Activated CD4-positive, alpha-beta T cell treated with anti-CD3 and anti-CD28 coated beads for 36 hours (primary cell): ENCODE measurements at regions of chr3 and their contacts with region 1.

Region 1: GRCh38 chr3:62665598-62666437 is 209.4 kb downstream of the CADPS start:
- DNase-seq: peak; percentile 64
- ATAC-seq: peak; percentile 47
- H3K4me3 Mint-ChIP-seq: no peak overlapping the region
- H3K27ac Mint-ChIP-seq: no peak overlapping the region
- H3K4me1 Mint-ChIP-seq: no peaks in the 10 kb centered on the region
- H3K27me3 Mint-ChIP-seq: no peaks in the 10 kb centered on the region

Region 2: GRCh38 chr3:62686506-62687286 is 20.9 kb after region 1 on chr3:
- CTCF ChIA-PET with region 1: no interaction called
- POLR2A ChIA-PET with region 1: no interaction called
- intact Hi-C with region 1: no loop called
- DNase-seq: no peak
- ATAC-seq: no peak
- H3K4me3 Mint-ChIP-seq: no peak overlapping the region
- H3K27ac Mint-ChIP-seq: no peak overlapping the region
- H3K4me1 Mint-ChIP-seq: no peaks in the 10 kb centered on the region
- H3K27me3 Mint-ChIP-seq: peaks cover 2% of the 10 kb centered on the region

Region 3: DNA sequence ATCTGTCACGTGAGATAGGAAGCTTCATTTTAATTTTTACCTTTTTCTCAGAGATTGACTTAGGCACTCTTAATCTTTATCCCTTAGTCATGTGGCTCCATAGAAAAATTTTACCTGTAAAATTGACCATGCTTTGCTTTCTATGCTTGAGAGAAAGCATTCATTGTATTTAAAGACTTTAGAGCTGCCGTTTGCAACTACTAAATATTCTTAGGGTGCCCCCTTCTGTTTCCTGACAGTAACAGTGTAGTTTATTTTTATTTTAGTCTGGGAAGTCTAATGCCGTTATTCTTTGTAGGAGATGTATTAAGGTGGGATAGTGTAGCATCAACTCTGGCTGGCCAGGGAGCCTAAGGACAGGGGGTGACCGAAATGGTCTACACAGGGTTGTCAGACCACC is 527.8 kb after region 1 on chr3:
- CTCF ChIA-PET with region 1: no interaction called
- POLR2A ChIA-PET with region 1: no interaction called
- intact Hi-C with region 1: loop called in 1 of 2 experiments (anchors 5 kb)
- DNase-seq: no peak
- ATAC-seq: no peak
- H3K4me3 Mint-ChIP-seq: no peak overlapping the region
- H3K27ac Mint-ChIP-seq: no peak overlapping the region
- H3K4me1 Mint-ChIP-seq: no peaks in the 10 kb centered on the region
- H3K27me3 Mint-ChIP-seq: peaks cover 5% of the 10 kb centered on the region